Heart left ventricle (tissue), 16 donors: ENCODE measurements at regions of chr13 and their contacts with region 1.

Region 1: GRCh38 chr13:99909824-99910619 is 61.5 kb downstream of the ZIC5 start:
- DNase-seq: no peak
- ATAC-seq: peak; percentile 20 to 70 (median 61)
- H3K4me3 ChIP-seq: no peak overlapping the region
- H3K27ac ChIP-seq: no peak overlapping the region
- H3K4me1 ChIP-seq: no peaks in the 10 kb centered on the region
- H3K27me3 ChIP-seq: peaks cover 0 to 72% (median 9%) of the 10 kb centered on the region in 9 donors
- CTCF ChIP-seq: no peak
- POLR2A ChIP-seq: no peak

Region 2: DNA sequence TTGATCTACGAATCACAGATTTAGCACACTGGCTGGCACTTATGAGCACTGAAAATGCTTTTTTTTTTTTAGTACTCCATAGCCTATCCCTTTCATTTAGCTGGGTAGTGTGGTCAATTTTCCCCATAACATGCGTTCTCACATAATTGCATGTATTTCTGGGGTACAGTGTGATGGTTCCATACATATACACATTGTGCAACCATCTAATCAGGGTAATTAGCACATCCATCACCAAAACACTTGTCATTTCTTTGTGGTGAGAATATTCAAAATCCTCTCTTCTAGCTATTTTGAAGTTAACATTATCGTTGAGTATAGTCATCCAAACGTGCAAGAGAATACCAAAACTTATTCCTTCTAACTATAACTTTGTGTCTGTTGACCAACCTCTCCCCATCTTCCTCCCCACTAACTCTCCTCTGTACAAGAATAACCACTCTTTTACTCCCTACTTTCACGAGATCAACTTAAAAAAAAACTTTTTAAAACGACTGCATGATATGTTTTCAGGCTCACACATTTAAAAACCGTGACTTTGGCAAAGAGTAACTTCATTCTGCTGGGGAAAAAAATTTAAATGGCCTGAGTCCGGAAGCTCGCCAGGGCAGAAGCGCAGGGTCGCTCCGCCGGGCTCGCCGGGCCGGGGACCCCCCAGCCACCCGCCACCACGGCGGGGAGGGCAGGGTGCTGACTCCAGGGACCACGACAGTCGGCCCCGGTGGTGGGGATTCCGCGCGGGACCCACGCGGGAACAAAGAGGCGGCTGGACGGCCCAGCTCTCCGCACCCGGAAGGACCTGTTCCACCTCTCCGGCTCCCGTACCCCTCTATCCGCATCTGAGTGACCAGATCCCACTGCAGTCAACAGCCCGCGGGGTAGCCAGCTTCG is 710.2 kb before region 1 on chr13:
- intact Hi-C with region 1: no loop called
- DNase-seq: no peak
- ATAC-seq: peak in 2 of 4 donors; percentile 3 to 26
- H3K4me3 ChIP-seq: peak overlapping the region; percentile 80 to 100 (median 92)
- H3K27ac ChIP-seq: peak overlapping the region; percentile 85 to 98 (median 96)
- H3K4me1 ChIP-seq: peaks cover 0 to 42% (median 28%) of the 10 kb centered on the region in 12 donors
- H3K27me3 ChIP-seq: no peaks in the 10 kb centered on the region
- CTCF ChIP-seq: no peak
- POLR2A ChIP-seq: no peak

Region 3: DNA sequence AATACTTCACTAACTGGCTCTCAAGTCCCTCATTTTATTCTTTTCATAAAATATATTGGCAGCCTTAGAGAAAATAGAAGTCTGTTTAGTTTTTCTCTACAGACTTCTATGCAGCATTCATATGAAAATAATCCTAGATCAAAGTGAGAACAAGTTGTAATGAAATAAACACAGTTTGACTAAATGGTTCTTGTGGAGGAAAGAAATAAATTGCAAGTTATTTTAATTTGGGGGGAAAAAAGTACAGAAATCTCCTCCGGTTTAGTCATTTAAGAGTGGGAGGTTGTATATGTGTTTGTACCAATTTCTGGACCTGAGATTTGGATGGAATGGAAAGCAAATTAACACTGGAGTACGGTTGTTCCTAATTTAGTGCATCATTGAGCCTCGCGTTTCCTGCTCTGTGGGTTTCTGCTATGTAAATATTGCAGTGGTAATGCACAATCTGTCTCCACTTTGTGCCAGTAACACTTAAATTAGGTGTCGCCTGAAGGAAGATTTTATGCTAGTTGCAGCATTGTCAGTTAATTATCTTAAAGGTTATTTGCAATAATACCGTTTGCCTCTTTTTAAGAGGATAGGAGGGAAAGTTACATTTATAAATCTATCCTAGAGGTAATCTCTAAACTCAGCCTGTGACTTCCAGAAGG is 38.6 kb before region 1 on chr13:
- intact Hi-C with region 1: no loop called
- DNase-seq: no peak
- ATAC-seq: no peak
- H3K4me3 ChIP-seq: no peak overlapping the region
- H3K27ac ChIP-seq: no peak overlapping the region
- H3K4me1 ChIP-seq: no peaks in the 10 kb centered on the region
- H3K27me3 ChIP-seq: no peaks in the 10 kb centered on the region
- CTCF ChIP-seq: no peak
- POLR2A ChIP-seq: no peak

Region 4: GRCh38 chr13:100594731-100595130 is 684.7 kb after region 1 on chr13:
- intact Hi-C with region 1: loop called in 1 of 10 experiments (anchors 5 kb)
- DNase-seq: no peak
- ATAC-seq: no peak
- H3K4me3 ChIP-seq: no peak overlapping the region
- H3K27ac ChIP-seq: no peak overlapping the region
- H3K4me1 ChIP-seq: no peaks in the 10 kb centered on the region
- H3K27me3 ChIP-seq: no peaks in the 10 kb centered on the region
- CTCF ChIP-seq: peak in 2 of 12 donors; percentile 7 to 10
- POLR2A ChIP-seq: no peak